HepG2 (cell line): ENCODE measurements at regions of chr5 and their contacts with region 1.

Region 1: GRCh38 chr5:6820851-6821479 is 107.7 kb downstream of the TENT4A start:
- DNase-seq: peak; percentile 47
- ATAC-seq: peak; percentile 84
- H3K4me3 ChIP-seq: no peak overlapping the region
- H3K27ac ChIP-seq: no peak overlapping the region
- H3K4me1 ChIP-seq: no peaks in the 10 kb centered on the region
- H3K27me3 ChIP-seq: 0 out of 5 replicates have a peak, but pooled peaks cover 0 to 5% of the 10 kb centered on the region in 2 experiments
- CTCF ChIP-seq: peak; percentile 85
- EP300 ChIP-seq: no peak
- POLR2A ChIP-seq: no peak
- RAD21 ChIP-seq: peak; percentile 72

Region 2: DNA sequence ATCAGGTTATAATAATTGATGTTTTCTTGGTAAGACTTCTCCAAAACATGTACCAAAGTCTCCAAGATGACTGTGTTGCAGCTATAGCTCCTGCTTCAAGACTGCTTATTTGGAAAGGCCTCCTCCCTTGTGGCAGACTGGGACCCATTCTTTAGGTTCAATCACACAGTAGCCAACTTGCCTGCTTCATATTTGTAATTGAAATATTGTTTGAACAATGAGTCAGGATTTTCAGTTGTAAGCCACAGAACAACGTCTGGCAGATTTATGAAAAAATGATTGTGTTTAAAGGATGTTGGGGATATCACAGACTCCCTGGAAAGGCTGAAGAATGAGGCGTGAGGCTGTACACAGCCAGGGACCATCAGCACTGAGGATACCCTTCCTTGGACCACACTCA is 901.6 kb before region 1 on chr5:
- CTCF ChIA-PET with region 1: no interaction called
- POLR2A ChIA-PET with region 1: no interaction called
- in situ Hi-C with region 1: no loop called
- intact Hi-C with region 1: no loop called
- DNase-seq: no peak
- ATAC-seq: no peak
- H3K4me3 ChIP-seq: no peak overlapping the region
- H3K27ac ChIP-seq: no peak overlapping the region
- H3K4me1 ChIP-seq: no peaks in the 10 kb centered on the region
- H3K27me3 ChIP-seq: no peaks in the 10 kb centered on the region
- CTCF ChIP-seq: no peak
- EP300 ChIP-seq: no peak
- POLR2A ChIP-seq: no peak
- RAD21 ChIP-seq: no peak

Region 3: GRCh38 chr5:6675763-6676499 is 145.0 kb before region 1 on chr5:
- CTCF ChIA-PET with region 1: no interaction called
- POLR2A ChIA-PET with region 1: no interaction called
- in situ Hi-C with region 1: no loop called
- intact Hi-C with region 1: no loop called
- DNase-seq: no peak
- ATAC-seq: no peak
- H3K4me3 ChIP-seq: no peak overlapping the region
- H3K27ac ChIP-seq: no peak overlapping the region
- H3K4me1 ChIP-seq: no peaks in the 10 kb centered on the region; the same call in 1 of the 2 replicates
- H3K27me3 ChIP-seq: no peaks in the 10 kb centered on the region
- CTCF ChIP-seq: no peak
- EP300 ChIP-seq: no peak
- POLR2A ChIP-seq: no peak
- RAD21 ChIP-seq: no peak

Region 4: DNA sequence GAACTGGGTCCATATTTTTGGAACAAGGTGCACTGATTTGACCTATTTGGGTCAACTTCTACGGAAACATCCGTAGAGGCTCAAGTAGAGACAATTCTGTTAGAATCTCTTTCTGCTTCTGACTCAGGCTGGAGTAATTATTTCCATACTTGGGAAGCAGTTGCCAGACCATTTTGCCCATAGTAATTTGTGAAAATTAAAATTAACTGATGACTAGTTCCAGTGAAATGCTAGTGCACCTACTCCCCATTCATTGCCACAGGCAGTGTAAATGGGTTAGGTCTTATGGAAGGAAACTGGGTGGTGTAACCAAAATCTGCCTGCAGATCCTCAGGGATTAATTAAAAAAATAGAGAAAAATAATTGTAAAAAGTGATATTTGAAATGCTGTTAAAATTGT is 93.4 kb after region 1 on chr5:
- CTCF ChIA-PET with region 1: interaction called, 11 read pairs
- POLR2A ChIA-PET with region 1: no interaction called
- in situ Hi-C with region 1: no loop called
- intact Hi-C with region 1: loop called (anchors 1 kb)
- DNase-seq: no peak
- ATAC-seq: no peak
- H3K4me3 ChIP-seq: no peak overlapping the region
- H3K27ac ChIP-seq: no peak overlapping the region
- H3K4me1 ChIP-seq: no peaks in the 10 kb centered on the region
- H3K27me3 ChIP-seq: peaks cover 0 to 18% of the 10 kb centered on the region in 2 experiments; a peak in 2 of 5 replicates
- CTCF ChIP-seq: no peak
- EP300 ChIP-seq: no peak
- POLR2A ChIP-seq: no peak
- RAD21 ChIP-seq: no peak

Region 5: GRCh38 chr5:6943197-6944112 is 122.5 kb after region 1 on chr5:
- CTCF ChIA-PET with region 1: interaction called, 7 read pairs
- POLR2A ChIA-PET with region 1: no interaction called
- in situ Hi-C with region 1: no loop called
- intact Hi-C with region 1: loop called (anchors 1 kb)
- DNase-seq: peak; percentile 8
- ATAC-seq: peak; percentile 84
- H3K4me3 ChIP-seq: no peak overlapping the region
- H3K27ac ChIP-seq: no peak overlapping the region
- H3K4me1 ChIP-seq: no peaks in the 10 kb centered on the region
- H3K27me3 ChIP-seq: no peaks in the 10 kb centered on the region
- CTCF ChIP-seq: peak; percentile 55
- EP300 ChIP-seq: no peak
- POLR2A ChIP-seq: no peak
- RAD21 ChIP-seq: no peak

Region 6: GRCh38 chr5:7391814-7392692 is 571.1 kb after region 1 on chr5:
- CTCF ChIA-PET with region 1: interaction called, 7 read pairs
- POLR2A ChIA-PET with region 1: no interaction called
- in situ Hi-C with region 1: loop called (anchors 25 kb)
- intact Hi-C with region 1: loop called (anchors 1 kb)
- DNase-seq: peak; percentile 6
- ATAC-seq: peak; percentile 54
- H3K4me3 ChIP-seq: no peak overlapping the region
- H3K27ac ChIP-seq: no peak overlapping the region
- H3K4me1 ChIP-seq: no peaks in the 10 kb centered on the region
- H3K27me3 ChIP-seq: peaks cover 0 to 16% of the 10 kb centered on the region in 2 experiments; a peak in 3 of 5 replicates
- CTCF ChIP-seq: peak; percentile 52
- EP300 ChIP-seq: no peak
- POLR2A ChIP-seq: no peak
- RAD21 ChIP-seq: no peak

Region 7: DNA sequence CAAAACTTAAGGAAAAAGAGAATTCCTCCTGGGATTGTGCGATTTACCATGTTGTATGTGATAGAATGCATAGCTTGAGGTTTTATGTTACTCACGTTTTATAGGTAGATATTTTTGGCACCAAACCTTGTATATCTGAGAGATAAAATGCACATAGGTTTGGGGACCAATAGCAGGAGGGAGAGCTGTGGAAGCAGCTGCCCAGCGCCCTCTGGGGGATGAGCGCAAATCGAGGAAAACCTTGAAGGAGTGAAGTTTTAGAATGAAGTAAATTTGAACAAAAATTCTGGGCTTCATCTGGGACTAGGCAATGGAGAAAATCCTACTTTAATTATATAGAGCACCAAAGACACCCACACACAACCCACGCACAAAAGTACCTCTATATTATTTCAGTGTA is 771.9 kb after region 1 on chr5:
- CTCF ChIA-PET with region 1: no interaction called
- POLR2A ChIA-PET with region 1: no interaction called
- in situ Hi-C with region 1: loop called (anchors 25 kb)
- intact Hi-C with region 1: no loop called
- DNase-seq: no peak
- ATAC-seq: no peak; the same call in 2 of the 3 replicates
- H3K4me3 ChIP-seq: no peak overlapping the region
- H3K27ac ChIP-seq: no peak overlapping the region
- H3K4me1 ChIP-seq: no peaks in the 10 kb centered on the region
- H3K27me3 ChIP-seq: no peaks in the 10 kb centered on the region
- CTCF ChIP-seq: peak; percentile 35
- EP300 ChIP-seq: no peak
- POLR2A ChIP-seq: no peak
- RAD21 ChIP-seq: no peak

Region 8: DNA sequence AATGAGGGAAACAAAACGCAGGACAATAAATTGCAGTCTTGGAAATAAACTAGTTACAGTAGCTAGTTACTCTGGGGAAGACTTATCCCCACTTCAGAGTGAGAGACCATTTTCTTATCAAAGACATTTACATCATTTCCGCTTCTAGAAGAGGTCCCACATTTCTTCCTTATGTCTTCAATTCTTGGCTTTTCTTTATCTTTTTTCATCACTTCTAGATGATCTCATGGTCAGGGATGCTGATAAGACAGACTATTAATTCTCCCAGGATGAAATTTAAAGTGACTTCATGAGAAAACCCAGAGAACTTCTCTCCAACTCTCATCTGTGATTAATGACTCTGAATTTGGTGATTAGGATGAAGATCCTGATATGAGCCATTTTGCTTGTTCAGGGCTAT is 1277.1 kb after region 1 on chr5:
- CTCF ChIA-PET with region 1: no interaction called
- POLR2A ChIA-PET with region 1: no interaction called
- in situ Hi-C with region 1: no loop called
- intact Hi-C with region 1: no loop called
- DNase-seq: no peak
- ATAC-seq: no peak
- H3K4me3 ChIP-seq: no peak overlapping the region
- H3K27ac ChIP-seq: no peak overlapping the region
- H3K4me1 ChIP-seq: no peaks in the 10 kb centered on the region
- H3K27me3 ChIP-seq: no peaks in the 10 kb centered on the region; a peak in 1 of 5 replicates
- CTCF ChIP-seq: no peak
- EP300 ChIP-seq: no peak
- POLR2A ChIP-seq: no peak
- RAD21 ChIP-seq: no peak